Panc1 (cell line): ENCODE measurements at regions of chr13 and their contacts with region 1.

Region 1: GRCh38 chr13:38582133-38582532 is 104.7 kb upstream of the FREM2 start:
- DNase-seq: peak; percentile 5
- ATAC-seq: peak; percentile 85
- H3K4me3 ChIP-seq: no peak overlapping the region
- H3K27ac ChIP-seq: no peak overlapping the region
- H3K4me1 ChIP-seq: no peaks in the 10 kb centered on the region
- H3K27me3 ChIP-seq: no peaks in the 10 kb centered on the region
- CTCF ChIP-seq: peak; percentile 54; the same call in 1 of the 2 replicates

Region 2: GRCh38 chr13:37074703-37075102 is 1507.4 kb before region 1 on chr13:
- CTCF ChIA-PET with region 1: no interaction called
- POLR2A ChIA-PET with region 1: no interaction called
- in situ Hi-C with region 1: no loop called
- intact Hi-C with region 1: loop called (anchors 10 kb)
- DNase-seq: no peak
- ATAC-seq: peak; percentile 63; the same call in 1 of the 2 replicates
- H3K4me3 ChIP-seq: no peak overlapping the region
- H3K27ac ChIP-seq: no peak overlapping the region
- H3K4me1 ChIP-seq: no peaks in the 10 kb centered on the region
- H3K27me3 ChIP-seq: no peaks in the 10 kb centered on the region
- CTCF ChIP-seq: peak; percentile 38; the same call in 1 of the 2 replicates

Region 3: GRCh38 chr13:39023790-39024189 is 441.7 kb after region 1 on chr13:
- CTCF ChIA-PET with region 1: no interaction called
- POLR2A ChIA-PET with region 1: no interaction called
- in situ Hi-C with region 1: no loop called
- intact Hi-C with region 1: no loop called
- DNase-seq: no peak
- ATAC-seq: no peak
- H3K4me3 ChIP-seq: no peak overlapping the region
- H3K27ac ChIP-seq: no peak overlapping the region
- H3K4me1 ChIP-seq: no peaks in the 10 kb centered on the region
- H3K27me3 ChIP-seq: no peaks in the 10 kb centered on the region
- CTCF ChIP-seq: no peak